Caco-2 (cell line): ENCODE measurements at regions of chr6 and their contacts with region 1.

Region 1: DNA sequence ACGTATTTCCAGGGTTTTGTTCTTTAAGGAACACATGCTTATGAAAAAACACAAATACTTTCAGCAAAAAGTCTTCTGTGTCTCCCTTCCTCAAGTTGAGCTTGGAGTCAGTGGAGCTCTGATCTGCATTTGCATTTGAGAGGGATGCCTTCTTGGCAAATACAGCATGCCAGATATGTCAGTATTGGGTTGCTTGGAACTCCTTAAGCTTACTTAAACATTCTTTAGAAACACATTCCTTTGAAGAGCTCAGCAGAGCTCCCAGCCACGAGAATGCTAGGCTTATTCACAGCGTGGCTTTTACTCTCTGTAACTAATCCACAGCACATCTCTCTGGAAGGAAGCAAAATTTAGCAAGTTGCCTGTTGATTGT is 68.3 kb downstream of the ANKRD6 start:
- DNase-seq: peak in 1 of 2 experiments; percentile 25
- H3K4me3 ChIP-seq: no peak overlapping the region
- H3K4me3 Mint-ChIP-seq: peak overlapping the region; percentile 51
- H3K27ac Mint-ChIP-seq: peak overlapping the region; percentile 69
- H3K4me1 ChIP-seq: peaks cover 43% of the 10 kb centered on the region
- H3K4me1 Mint-ChIP-seq: peaks cover 24% of the 10 kb centered on the region
- H3K27me3 ChIP-seq: no peaks in the 10 kb centered on the region
- H3K27me3 Mint-ChIP-seq: no peaks in the 10 kb centered on the region
- CTCF ChIP-seq: no peak

Region 2: GRCh38 chr6:89432875-89433251 is 68.4 kb before region 1 on chr6 and contains the start of gene ANKRD6:
- CTCF ChIA-PET with region 1: no interaction called
- POLR2A ChIA-PET with region 1: no interaction called
- intact Hi-C with region 1: loop called (anchors 5 kb)
- DNase-seq: peak; percentile 50 to 91
- H3K4me3 ChIP-seq: peak within 1 kb of the TSS; percentile 59
- H3K4me3 Mint-ChIP-seq: peak within 1 kb of the TSS; percentile 65
- H3K27ac Mint-ChIP-seq: no peak within 1 kb of the TSS
- H3K4me1 ChIP-seq: peaks cover under 1% of the 10 kb centered on the region; the same call in 1 of the 2 replicates
- H3K4me1 Mint-ChIP-seq: peaks cover 6% of the 10 kb centered on the region
- H3K27me3 ChIP-seq: no peaks in the 10 kb centered on the region
- H3K27me3 Mint-ChIP-seq: peaks cover 13% of the 10 kb centered on the region
- CTCF ChIP-seq: peak; percentile 72 to 83
- total RNA-seq, gene ANKRD6: 20.5 and 25.6 TPM in 2 replicates

Region 3: DNA sequence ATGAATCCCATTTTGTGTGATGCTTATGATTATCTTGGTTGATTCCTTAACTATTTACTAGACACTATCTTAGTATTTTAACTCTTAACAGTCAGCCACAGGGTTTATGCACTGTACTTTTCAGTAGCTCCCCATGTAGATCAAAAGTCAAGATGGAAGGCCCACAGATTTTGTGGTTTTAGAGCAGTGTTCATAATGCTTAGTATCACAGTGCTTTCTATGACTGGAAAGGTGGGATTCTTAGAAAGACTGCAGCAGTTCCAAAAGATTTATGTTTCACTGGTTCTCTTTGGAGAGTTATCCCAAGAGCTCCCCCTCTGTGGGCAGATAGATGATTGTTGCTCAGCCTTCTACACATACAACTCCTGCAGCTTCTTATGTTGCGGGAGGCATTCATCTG is 33.8 kb before region 1 on chr6:
- CTCF ChIA-PET with region 1: no interaction called
- POLR2A ChIA-PET with region 1: no interaction called
- intact Hi-C with region 1: loop called (anchors 5 kb)
- DNase-seq: no peak
- H3K4me3 ChIP-seq: no peak overlapping the region
- H3K4me3 Mint-ChIP-seq: no peak overlapping the region
- H3K27ac Mint-ChIP-seq: no peak overlapping the region
- H3K4me1 ChIP-seq: no peaks in the 10 kb centered on the region
- H3K4me1 Mint-ChIP-seq: peaks cover 18% of the 10 kb centered on the region
- H3K27me3 ChIP-seq: no peaks in the 10 kb centered on the region; the same call in 1 of the 2 replicates
- H3K27me3 Mint-ChIP-seq: no peaks in the 10 kb centered on the region
- CTCF ChIP-seq: no peak

Region 4: GRCh38 chr6:89483111-89483720 is 18.0 kb before region 1 on chr6:
- CTCF ChIA-PET with region 1: interaction called, 3 read pairs
- POLR2A ChIA-PET with region 1: no interaction called
- intact Hi-C with region 1: loop called (anchors 2 kb)
- DNase-seq: peak; percentile 43 to 60
- H3K4me3 ChIP-seq: no peak overlapping the region
- H3K4me3 Mint-ChIP-seq: peak overlapping the region; percentile 23
- H3K27ac Mint-ChIP-seq: peak overlapping the region; percentile 75
- H3K4me1 ChIP-seq: peaks cover 12% of the 10 kb centered on the region
- H3K4me1 Mint-ChIP-seq: peaks cover 16% of the 10 kb centered on the region
- H3K27me3 ChIP-seq: no peaks in the 10 kb centered on the region
- H3K27me3 Mint-ChIP-seq: no peaks in the 10 kb centered on the region
- CTCF ChIP-seq: no peak

Region 5: DNA sequence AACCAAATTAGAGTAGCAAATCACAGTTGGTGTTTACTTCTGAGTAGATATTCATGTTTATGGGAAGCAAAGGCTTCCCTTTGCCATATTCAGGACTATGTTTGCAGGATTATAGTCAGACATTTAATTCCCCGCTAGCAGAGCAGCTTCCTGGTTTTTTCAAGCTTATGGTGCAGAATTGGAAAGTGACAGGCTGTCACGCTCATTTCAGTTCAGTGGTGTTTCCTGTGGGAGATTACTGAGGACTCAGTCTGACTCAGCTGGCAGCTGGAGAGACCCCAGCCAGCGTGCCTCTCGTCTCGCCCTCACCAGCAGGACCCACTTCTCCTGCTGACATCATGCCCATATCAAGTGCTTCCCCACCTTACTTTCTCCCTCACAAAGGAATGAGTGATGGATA is 52.2 kb after region 1 on chr6:
- CTCF ChIA-PET with region 1: no interaction called
- POLR2A ChIA-PET with region 1: no interaction called
- intact Hi-C with region 1: no loop called
- DNase-seq: no peak
- H3K4me3 ChIP-seq: no peak overlapping the region
- H3K4me3 Mint-ChIP-seq: no peak overlapping the region
- H3K27ac Mint-ChIP-seq: no peak overlapping the region
- H3K4me1 ChIP-seq: no peaks in the 10 kb centered on the region
- H3K4me1 Mint-ChIP-seq: no peaks in the 10 kb centered on the region
- H3K27me3 ChIP-seq: no peaks in the 10 kb centered on the region
- H3K27me3 Mint-ChIP-seq: no peaks in the 10 kb centered on the region
- CTCF ChIP-seq: no peak